Activated naive CD4-positive, alpha-beta T cell treated with anti-CD3 and anti-CD28 coated beads for 36 hours (primary cell): ENCODE measurements at regions of chrX and their contacts with region 1.

Region 1: DNA sequence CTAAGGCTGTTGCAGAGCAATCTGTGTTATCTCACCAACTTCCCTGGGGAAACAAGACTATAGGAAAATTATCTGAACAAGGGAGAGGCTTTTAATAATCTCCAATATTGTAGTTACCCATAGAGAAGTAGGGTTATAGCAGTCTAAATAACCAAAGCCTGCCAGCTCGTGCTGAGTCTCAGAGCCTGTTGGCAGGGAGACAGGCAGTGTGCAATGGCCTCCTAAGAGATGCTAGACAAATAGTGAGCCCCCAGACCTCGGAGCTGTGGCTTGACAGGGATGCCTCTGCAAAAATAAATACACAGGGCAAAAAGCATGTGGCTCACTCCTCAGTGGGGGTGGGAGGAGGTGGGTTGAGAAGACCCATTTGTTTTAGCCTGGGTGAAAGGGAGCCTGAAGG is 76.7 kb downstream of the DGKK start:
- DNase-seq: no peak
- H3K4me3 Mint-ChIP-seq: no peak overlapping the region
- H3K27ac Mint-ChIP-seq: no peak overlapping the region
- H3K4me1 Mint-ChIP-seq: no peaks in the 10 kb centered on the region
- H3K27me3 Mint-ChIP-seq: no peaks in the 10 kb centered on the region

Region 2: DNA sequence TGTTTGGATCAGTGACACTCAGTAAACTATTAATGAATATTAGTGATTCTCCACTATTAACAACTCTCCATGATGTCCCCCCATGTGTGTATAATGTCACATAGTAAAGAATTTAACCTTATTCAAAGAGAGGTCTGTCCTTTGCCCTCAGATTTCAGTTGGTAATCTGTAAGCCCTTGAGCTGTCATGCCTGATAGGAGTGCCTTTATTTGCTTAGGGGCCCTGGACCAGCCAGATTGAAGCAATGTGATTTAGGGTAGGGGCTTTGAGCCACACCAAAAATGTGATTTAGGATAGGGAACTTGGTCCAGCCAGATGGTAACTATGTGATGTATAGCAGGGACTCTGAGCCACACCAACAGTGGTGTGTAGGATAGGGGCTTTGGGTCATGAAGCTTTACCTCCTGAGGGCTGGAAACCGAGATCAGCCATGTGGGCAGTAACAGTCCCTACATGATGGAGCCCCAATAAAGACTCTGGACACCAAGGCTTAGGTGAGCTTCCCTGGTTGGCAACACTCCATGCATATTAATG is 609.1 kb before region 1 on chrX:
- CTCF ChIA-PET with region 1: no interaction called
- intact Hi-C with region 1: loop called (anchors 5 kb)
- DNase-seq: no peak
- H3K4me3 Mint-ChIP-seq: no peak overlapping the region
- H3K27ac Mint-ChIP-seq: no peak overlapping the region
- H3K4me1 Mint-ChIP-seq: no peaks in the 10 kb centered on the region
- H3K27me3 Mint-ChIP-seq: no peaks in the 10 kb centered on the region

Region 3: GRCh38 chrX:49878834-49879659 is 514.9 kb before region 1 on chrX and contains the start of gene USP27X:
- CTCF ChIA-PET with region 1: no interaction called
- intact Hi-C with region 1: no loop called
- DNase-seq: peak; percentile 77
- H3K4me3 Mint-ChIP-seq: peak within 1 kb of the TSS; percentile 74
- H3K27ac Mint-ChIP-seq: peak within 1 kb of the TSS; percentile 76
- H3K4me1 Mint-ChIP-seq: peaks cover 32% of the 10 kb centered on the region
- H3K27me3 Mint-ChIP-seq: no peaks in the 10 kb centered on the region
- total RNA-seq, gene USP27X: 1.7 to 1.9 TPM